ENCODE measurements at regions of chr1 and their contacts with region 1.

Region 1: DNA sequence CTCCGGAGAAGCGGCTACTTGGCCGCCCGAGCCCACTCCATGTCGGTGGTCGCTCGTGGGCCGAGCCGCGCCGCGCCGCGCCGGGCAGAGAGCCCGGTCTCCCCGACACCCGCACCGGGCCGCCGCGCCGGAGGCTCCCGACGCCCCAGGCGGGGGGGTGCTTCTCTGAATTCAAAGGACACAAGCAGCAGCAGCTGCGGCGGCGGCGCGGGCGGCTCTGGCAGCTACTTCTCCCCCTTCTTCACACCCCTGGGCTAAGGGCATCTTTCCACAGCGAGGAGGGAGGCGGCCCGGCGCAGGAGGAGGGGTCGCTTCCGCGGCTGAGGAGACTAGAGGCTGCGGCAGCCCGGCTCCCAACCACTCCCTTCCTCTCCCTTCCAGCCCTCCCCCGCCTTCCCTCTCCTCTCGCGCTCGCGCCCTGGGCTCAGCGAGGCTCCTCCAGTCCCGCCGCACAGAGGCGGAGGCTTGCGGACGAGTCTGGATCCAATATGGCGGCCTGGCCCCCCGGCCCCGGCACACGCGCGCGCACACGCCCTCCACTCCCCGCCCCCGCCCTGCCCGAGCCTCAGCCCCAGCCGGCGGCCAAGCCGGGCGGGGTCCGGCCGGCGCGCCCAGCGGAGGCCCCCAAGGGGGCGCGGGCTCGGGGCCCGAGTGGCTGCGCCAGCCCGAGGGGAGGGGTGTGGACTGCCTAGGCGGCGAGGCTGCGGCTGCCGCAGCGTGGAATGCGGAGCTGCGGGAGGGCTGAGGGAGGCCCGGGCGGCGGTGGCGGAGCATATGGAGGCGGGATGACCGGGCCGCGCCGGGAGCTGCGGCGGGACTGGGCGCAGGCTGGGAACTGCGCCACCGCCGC is at the start of gene CDC42BPA:
- DNase-seq: peak; percentile 96
- ATAC-seq: peak; percentile 78
- H3K4me3 ChIP-seq: peak within 1 kb of the TSS; percentile 72
- H3K27ac ChIP-seq: peak within 1 kb of the TSS; percentile 60
- H3K4me1 ChIP-seq: peaks cover 15% of the 10 kb centered on the region
- H3K27me3 ChIP-seq: no peaks in the 10 kb centered on the region
- CTCF ChIP-seq: no peak
- total RNA-seq, gene CDC42BPA: 32.0 and 42.1 TPM in 2 replicates

Region 2: GRCh38 chr1:226891846-226892523 is 426.2 kb before region 1 on chr1:
- CTCF ChIA-PET with region 1: no interaction called
- POLR2A ChIA-PET with region 1: interaction called, 13 read pairs
- intact Hi-C with region 1: no loop called
- DNase-seq: no peak
- ATAC-seq: peak; percentile 27
- H3K4me3 ChIP-seq: no peak overlapping the region
- H3K27ac ChIP-seq: no peak overlapping the region
- H3K4me1 ChIP-seq: no peaks in the 10 kb centered on the region
- H3K27me3 ChIP-seq: no peaks in the 10 kb centered on the region
- CTCF ChIP-seq: no peak

Region 3: GRCh38 chr1:227210604-227211003 is 107.6 kb before region 1 on chr1:
- CTCF ChIA-PET with region 1: no interaction called
- POLR2A ChIA-PET with region 1: no interaction called
- intact Hi-C with region 1: no loop called
- DNase-seq: no peak
- ATAC-seq: no peak
- H3K4me3 ChIP-seq: no peak overlapping the region
- H3K27ac ChIP-seq: no peak overlapping the region
- H3K4me1 ChIP-seq: peaks cover 13% of the 10 kb centered on the region
- H3K27me3 ChIP-seq: no peaks in the 10 kb centered on the region
- CTCF ChIP-seq: no peak

Region 4: DNA sequence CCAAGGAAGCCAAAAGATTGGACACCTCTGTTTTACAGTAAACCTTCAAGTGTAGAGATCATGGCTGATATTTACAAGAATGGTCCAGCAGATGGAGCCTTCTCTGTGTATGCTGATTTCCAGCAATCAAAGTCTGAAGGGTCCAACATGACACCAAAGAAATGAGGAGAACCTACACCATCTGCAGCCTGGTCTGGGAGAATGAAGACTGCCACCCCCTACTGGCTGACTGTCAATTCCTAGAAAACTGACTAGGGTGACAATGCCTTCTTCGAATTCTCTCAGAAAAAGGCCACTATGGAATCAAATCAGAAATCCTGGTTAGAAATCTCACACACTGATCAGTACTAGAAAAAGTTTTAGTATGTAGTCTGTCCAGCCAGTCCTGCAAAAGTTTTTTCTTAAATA is 83.2 kb before region 1 on chr1:
- CTCF ChIA-PET with region 1: no interaction called
- POLR2A ChIA-PET with region 1: no interaction called
- intact Hi-C with region 1: loop called (anchors 1 kb)
- DNase-seq: peak; percentile 95
- ATAC-seq: peak; percentile 97
- H3K4me3 ChIP-seq: no peak overlapping the region
- H3K27ac ChIP-seq: no peak overlapping the region
- H3K4me1 ChIP-seq: no peaks in the 10 kb centered on the region
- H3K27me3 ChIP-seq: no peaks in the 10 kb centered on the region
- CTCF ChIP-seq: peak; percentile 98

Region 5: GRCh38 chr1:227343727-227344551 is 25.7 kb after region 1 on chr1:
- CTCF ChIA-PET with region 1: interaction called, 4 read pairs
- POLR2A ChIA-PET with region 1: interaction called, 4 read pairs
- intact Hi-C with region 1: loop called (anchors 2 kb)
- DNase-seq: peak; percentile 82
- ATAC-seq: peak; percentile 96
- H3K4me3 ChIP-seq: peak overlapping the region; percentile 4; the same call in 1 of the 2 replicates
- H3K27ac ChIP-seq: no peak overlapping the region
- H3K4me1 ChIP-seq: peaks cover 16% of the 10 kb centered on the region
- H3K27me3 ChIP-seq: no peaks in the 10 kb centered on the region
- CTCF ChIP-seq: no peak

Region 6: DNA sequence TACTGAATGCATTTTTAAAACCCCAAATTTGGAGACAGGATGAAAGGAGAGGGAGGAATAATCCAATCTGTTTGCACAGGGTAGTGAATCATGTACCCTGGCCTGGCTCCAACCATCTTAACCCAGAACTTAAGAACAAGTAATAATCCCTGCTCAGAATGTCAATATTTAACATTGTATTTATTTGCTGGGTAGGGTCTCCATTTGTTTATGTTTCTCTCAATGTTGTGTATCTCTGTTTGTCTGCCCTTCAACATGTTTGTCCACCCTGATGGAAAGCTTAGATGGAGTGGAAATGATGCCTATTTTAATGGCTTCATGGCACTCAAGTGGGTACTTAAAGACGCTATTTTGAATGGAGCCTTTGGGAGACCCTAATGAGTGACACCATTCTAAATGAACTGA is 54.5 kb after region 1 on chr1:
- CTCF ChIA-PET with region 1: no interaction called
- POLR2A ChIA-PET with region 1: interaction called, 4 read pairs
- intact Hi-C with region 1: loop called (anchors 1 kb)
- DNase-seq: peak; percentile 98
- ATAC-seq: peak; percentile 60
- H3K4me3 ChIP-seq: no peak overlapping the region
- H3K27ac ChIP-seq: peak overlapping the region; percentile 35
- H3K4me1 ChIP-seq: peaks cover 46% of the 10 kb centered on the region
- H3K27me3 ChIP-seq: no peaks in the 10 kb centered on the region
- CTCF ChIP-seq: no peak

Region 7: DNA sequence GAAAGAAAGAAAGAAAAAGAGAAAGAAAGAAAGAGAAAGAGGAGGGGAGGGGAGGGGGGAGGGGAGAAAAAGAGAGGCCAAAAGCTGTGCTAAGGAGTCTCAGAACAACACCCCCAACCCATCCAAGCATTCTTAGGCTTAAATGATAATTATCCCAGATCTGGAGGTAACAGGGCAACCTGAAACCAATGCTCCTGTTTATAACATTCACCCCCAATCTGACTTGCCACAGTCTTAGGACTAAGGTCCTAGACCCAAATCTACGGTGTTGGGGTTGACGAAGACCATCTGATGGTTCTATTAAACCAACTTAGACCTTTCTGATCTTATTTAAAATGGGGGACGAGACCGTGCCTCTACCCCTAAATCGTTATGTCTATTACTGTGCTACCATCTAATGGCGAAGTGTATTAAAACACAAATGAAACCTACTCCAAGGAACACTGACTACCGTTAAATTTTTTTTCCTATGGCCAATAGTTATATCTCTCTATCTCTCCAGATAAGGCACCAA is 119.3 kb after region 1 on chr1:
- CTCF ChIA-PET with region 1: interaction called, 3 read pairs
- POLR2A ChIA-PET with region 1: no interaction called
- intact Hi-C with region 1: loop called (anchors 1 kb)
- DNase-seq: peak; percentile 90
- ATAC-seq: peak; percentile 84
- H3K4me3 ChIP-seq: peak overlapping the region; percentile 65
- H3K27ac ChIP-seq: no peak overlapping the region
- H3K4me1 ChIP-seq: no peaks in the 10 kb centered on the region
- H3K27me3 ChIP-seq: no peaks in the 10 kb centered on the region
- CTCF ChIP-seq: peak; percentile 98